Activated naive CD4-positive, alpha-beta T cell treated with anti-CD3 and anti-CD28 coated beads for 36 hours (primary cell): ENCODE measurements at regions of chr9 and their contacts with region 1.

Region 1: GRCh38 chr9:20622330-20623020 is at the start of gene MLLT3:
- DNase-seq: peak; percentile 97
- H3K4me3 Mint-ChIP-seq: peak within 1 kb of the TSS; percentile 98
- H3K27ac Mint-ChIP-seq: peak within 1 kb of the TSS; percentile 95
- H3K4me1 Mint-ChIP-seq: peaks cover 36% of the 10 kb centered on the region
- H3K27me3 Mint-ChIP-seq: no peaks in the 10 kb centered on the region
- total RNA-seq, gene MLLT3: 44.3 to 51.4 TPM

Region 2: DNA sequence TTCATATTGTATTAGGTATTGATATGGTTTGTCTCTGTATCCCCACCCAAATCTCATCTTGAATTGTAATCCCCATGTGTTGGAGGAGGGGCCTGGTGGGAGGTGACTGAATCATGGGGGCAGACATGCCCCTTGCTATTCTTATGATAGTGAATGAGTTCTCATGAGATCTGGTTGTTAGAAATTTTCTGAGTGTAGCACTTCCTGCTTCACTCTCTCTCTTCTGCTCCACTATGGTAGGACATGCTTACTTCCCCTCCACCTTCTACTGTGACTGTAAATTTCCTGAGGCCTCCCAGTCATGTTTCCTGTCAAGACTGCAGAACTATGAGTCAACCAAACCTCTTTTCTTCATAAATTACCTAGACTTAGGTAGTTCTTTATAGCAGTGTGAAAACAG is 646.2 kb before region 1 on chr9:
- CTCF ChIA-PET with region 1: no interaction called
- intact Hi-C with region 1: loop called (anchors 1 kb)
- DNase-seq: peak; percentile 69
- H3K4me3 Mint-ChIP-seq: no peak overlapping the region
- H3K27ac Mint-ChIP-seq: peak overlapping the region; percentile 83
- H3K4me1 Mint-ChIP-seq: peaks cover 28% of the 10 kb centered on the region
- H3K27me3 Mint-ChIP-seq: no peaks in the 10 kb centered on the region

Region 3: GRCh38 chr9:20225841-20226240 is 396.6 kb before region 1 on chr9:
- CTCF ChIA-PET with region 1: no interaction called
- intact Hi-C with region 1: no loop called
- DNase-seq: no peak
- H3K4me3 Mint-ChIP-seq: no peak overlapping the region
- H3K27ac Mint-ChIP-seq: no peak overlapping the region
- H3K4me1 Mint-ChIP-seq: peaks cover 38% of the 10 kb centered on the region
- H3K27me3 Mint-ChIP-seq: no peaks in the 10 kb centered on the region

Region 4: GRCh38 chr9:20256284-20256948 is 366.1 kb before region 1 on chr9:
- CTCF ChIA-PET with region 1: interaction called, 3 read pairs
- intact Hi-C with region 1: loop called (anchors 2 kb)
- DNase-seq: no peak
- H3K4me3 Mint-ChIP-seq: no peak overlapping the region
- H3K27ac Mint-ChIP-seq: no peak overlapping the region
- H3K4me1 Mint-ChIP-seq: peaks cover 38% of the 10 kb centered on the region
- H3K27me3 Mint-ChIP-seq: no peaks in the 10 kb centered on the region

Region 5: GRCh38 chr9:20426019-20426418 is 196.5 kb before region 1 on chr9:
- CTCF ChIA-PET with region 1: interaction called, 8 read pairs
- intact Hi-C with region 1: loop called (anchors 2 kb)
- DNase-seq: no peak
- H3K4me3 Mint-ChIP-seq: no peak overlapping the region
- H3K27ac Mint-ChIP-seq: no peak overlapping the region
- H3K4me1 Mint-ChIP-seq: peaks cover 28% of the 10 kb centered on the region
- H3K27me3 Mint-ChIP-seq: no peaks in the 10 kb centered on the region

Region 6: DNA sequence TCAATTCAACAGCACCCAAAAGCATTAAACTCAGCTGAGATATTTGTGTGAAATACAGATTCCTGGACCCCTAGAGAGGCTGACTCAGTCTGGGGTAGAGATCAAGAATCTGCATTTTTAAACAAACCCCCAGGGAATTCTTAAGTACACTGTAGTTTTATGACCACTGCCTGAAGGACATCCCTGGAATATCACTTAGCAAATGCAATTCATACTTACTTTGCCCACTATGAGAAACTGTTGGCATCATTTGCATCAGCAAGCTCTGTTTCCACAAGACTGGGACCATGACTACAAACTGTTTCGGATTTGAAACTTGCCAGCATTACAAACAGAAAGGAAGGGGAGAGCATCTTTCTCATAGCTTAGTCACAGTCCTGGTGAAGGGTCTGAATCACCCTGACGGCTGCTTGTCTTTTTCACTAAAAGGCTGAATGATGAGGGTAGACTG is 63.9 kb before region 1 on chr9:
- CTCF ChIA-PET with region 1: interaction called, 5 read pairs
- intact Hi-C with region 1: loop called (anchors 1 kb)
- DNase-seq: peak; percentile 70
- H3K4me3 Mint-ChIP-seq: peak overlapping the region; percentile 36
- H3K27ac Mint-ChIP-seq: peak overlapping the region; percentile 59
- H3K4me1 Mint-ChIP-seq: peaks cover 86% of the 10 kb centered on the region
- H3K27me3 Mint-ChIP-seq: no peaks in the 10 kb centered on the region

Region 7: GRCh38 chr9:20884985-20885593 is 262.6 kb after region 1 on chr9:
- CTCF ChIA-PET with region 1: interaction called, 6 read pairs
- intact Hi-C with region 1: loop called (anchors 1 kb)
- DNase-seq: peak; percentile 78
- H3K4me3 Mint-ChIP-seq: no peak overlapping the region
- H3K27ac Mint-ChIP-seq: no peak overlapping the region
- H3K4me1 Mint-ChIP-seq: no peaks in the 10 kb centered on the region
- H3K27me3 Mint-ChIP-seq: no peaks in the 10 kb centered on the region

Region 8: DNA sequence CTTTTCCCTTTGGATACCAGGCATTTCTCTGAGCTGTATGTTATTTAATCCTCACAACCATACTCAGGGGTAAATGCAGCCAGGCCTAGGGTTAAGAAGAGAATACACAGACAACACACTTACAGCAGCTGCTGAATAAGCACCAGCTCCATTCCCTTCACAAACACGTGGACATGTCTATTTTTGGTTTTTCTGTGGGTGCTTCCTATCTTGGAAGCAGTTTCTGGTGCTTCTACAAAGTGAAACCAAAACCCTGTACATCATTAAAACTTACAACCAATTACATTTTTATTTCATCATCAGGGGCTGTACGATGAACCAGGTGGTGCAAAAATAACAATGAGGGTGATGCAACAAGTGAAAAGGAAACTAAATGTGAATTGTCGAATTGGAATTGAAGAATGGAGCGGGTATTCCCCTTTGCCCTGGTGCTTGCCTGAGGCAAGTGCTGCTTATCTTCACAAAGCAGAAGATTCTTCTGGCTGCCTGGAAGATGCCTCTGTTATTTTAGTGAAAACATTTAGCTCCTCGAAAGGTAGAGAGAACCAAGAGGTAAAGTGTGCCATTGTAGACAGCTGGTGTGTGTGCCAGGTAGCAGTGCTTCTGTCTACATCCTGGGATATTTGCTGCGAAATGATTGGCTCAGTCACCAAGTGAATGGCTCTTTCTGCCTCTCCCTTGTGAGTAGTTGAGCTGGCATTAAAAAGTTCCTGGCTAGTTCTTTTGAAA is 473.9 kb after region 1 on chr9:
- CTCF ChIA-PET with region 1: no interaction called
- intact Hi-C with region 1: loop called (anchors 1 kb)
- DNase-seq: peak; percentile 67
- H3K4me3 Mint-ChIP-seq: peak overlapping the region; percentile 76
- H3K27ac Mint-ChIP-seq: peak overlapping the region; percentile 94
- H3K4me1 Mint-ChIP-seq: peaks cover 39% of the 10 kb centered on the region
- H3K27me3 Mint-ChIP-seq: no peaks in the 10 kb centered on the region